Activated CD4-positive, alpha-beta memory T cell treated with anti-CD3 and anti-CD28 coated beads for 36 hours (primary cell): ENCODE measurements at regions of chr10 and their contacts with region 1.

Region 1: GRCh38 chr10:89391917-89392756 is at the start of gene IFIT1:
- DNase-seq: peak; percentile 47
- H3K4me3 Mint-ChIP-seq: peak within 1 kb of the TSS; percentile 74
- H3K27ac Mint-ChIP-seq: peak within 1 kb of the TSS; percentile 38
- H3K4me1 Mint-ChIP-seq: peaks cover 27% of the 10 kb centered on the region
- H3K27me3 Mint-ChIP-seq: no peaks in the 10 kb centered on the region
- total RNA-seq, gene IFIT1: 5.2 to 5.5 TPM

Region 2: DNA sequence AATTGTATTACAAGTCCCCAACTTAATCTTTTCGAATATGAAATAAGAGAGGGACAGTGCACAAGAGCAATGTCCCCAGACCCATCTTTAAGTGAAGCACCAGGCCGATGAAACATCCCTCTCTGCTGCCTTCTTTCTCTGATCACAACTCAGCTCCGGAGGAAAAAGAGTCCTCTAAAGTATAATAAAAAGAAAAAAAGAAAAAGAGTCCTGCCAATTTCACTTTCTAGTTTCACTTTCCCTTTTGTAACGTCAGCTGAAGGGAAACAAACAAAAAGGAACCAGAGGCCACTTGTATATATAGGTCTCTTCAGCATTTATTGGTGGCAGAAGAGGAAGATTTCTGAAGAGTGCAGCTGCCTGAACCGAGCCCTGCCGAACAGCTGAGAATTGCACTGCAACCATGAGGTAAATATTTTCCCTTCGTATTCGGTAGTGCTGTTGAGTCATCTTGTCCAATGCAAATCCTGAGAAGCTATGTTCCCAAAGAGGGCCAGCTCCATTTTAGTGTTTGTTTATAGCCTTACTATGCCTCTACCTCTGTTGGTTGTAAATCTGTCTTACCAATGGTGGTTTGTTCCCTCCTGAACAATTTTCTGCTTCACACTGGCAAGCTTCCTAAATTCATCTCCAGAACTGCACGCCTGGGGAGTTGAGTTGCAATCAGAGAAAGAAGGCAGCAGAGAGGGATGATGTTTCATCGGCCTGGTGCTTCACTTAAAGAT is 90.3 kb before region 1 on chr10 and contains the start of gene IFIT2:
- CTCF ChIA-PET with region 1: no interaction called
- POLR2A ChIA-PET with region 1: no interaction called
- intact Hi-C with region 1: loop called (anchors 1 kb)
- DNase-seq: peak; percentile 40
- H3K4me3 Mint-ChIP-seq: peak within 1 kb of the TSS; percentile 79
- H3K27ac Mint-ChIP-seq: peak within 1 kb of the TSS; percentile 68
- H3K4me1 Mint-ChIP-seq: peaks cover 32% of the 10 kb centered on the region
- H3K27me3 Mint-ChIP-seq: no peaks in the 10 kb centered on the region
- total RNA-seq, gene IFIT2: 26.6 to 27.7 TPM

Region 3: DNA sequence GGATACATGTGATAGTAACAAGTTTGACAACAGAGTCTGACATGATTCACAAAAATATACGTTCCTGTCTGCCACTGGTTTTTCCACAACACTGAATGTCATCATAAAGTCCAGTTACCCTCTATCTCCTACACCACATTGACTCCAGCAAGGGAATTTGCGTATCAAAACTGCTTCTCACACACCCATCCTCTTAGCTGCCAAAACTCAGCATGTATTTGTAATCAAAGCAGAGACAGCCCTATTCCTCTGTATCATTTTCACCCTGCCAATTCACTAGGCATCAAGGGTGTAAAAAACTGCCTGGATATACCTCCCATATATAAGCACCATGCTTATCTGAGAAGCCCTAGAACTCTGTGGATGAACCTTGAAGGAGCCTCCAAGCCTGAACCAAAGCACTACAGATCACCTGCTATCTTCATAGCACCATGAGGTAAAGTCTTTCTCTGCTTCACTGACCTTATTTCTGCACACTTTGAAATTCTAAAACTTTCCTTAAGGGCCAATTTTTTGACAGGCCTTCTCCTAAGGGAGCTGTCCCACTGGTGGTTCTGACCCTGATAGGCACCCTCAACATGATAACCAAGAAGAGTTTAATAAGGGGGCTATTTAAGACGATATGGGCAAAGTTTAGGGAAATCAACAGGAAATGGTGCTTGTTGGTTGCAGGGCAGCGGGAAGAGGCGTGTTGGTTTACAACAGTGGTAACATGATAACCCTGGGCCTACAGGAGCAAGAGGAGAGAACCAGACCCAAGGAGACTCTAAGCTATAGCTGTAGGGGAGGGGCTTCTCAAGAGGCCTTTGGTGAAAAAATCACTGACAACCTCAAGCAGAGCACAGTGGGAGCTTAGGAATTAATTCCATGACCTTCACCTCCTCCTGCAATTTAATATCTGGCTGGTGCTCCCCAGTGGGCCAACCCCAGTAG is 14.2 kb before region 1 on chr10 and contains the start of gene IFIT1B:
- CTCF ChIA-PET with region 1: no interaction called
- POLR2A ChIA-PET with region 1: no interaction called
- intact Hi-C with region 1: no loop called
- DNase-seq: no peak
- H3K4me3 Mint-ChIP-seq: no peak within 1 kb of the TSS
- H3K27ac Mint-ChIP-seq: no peak within 1 kb of the TSS
- H3K4me1 Mint-ChIP-seq: peaks cover 2% of the 10 kb centered on the region
- H3K27me3 Mint-ChIP-seq: no peaks in the 10 kb centered on the region
- total RNA-seq, gene IFIT1B: not detected